ENCODE measurements at regions of chr5 and their contacts with region 1.

Region 1: DNA sequence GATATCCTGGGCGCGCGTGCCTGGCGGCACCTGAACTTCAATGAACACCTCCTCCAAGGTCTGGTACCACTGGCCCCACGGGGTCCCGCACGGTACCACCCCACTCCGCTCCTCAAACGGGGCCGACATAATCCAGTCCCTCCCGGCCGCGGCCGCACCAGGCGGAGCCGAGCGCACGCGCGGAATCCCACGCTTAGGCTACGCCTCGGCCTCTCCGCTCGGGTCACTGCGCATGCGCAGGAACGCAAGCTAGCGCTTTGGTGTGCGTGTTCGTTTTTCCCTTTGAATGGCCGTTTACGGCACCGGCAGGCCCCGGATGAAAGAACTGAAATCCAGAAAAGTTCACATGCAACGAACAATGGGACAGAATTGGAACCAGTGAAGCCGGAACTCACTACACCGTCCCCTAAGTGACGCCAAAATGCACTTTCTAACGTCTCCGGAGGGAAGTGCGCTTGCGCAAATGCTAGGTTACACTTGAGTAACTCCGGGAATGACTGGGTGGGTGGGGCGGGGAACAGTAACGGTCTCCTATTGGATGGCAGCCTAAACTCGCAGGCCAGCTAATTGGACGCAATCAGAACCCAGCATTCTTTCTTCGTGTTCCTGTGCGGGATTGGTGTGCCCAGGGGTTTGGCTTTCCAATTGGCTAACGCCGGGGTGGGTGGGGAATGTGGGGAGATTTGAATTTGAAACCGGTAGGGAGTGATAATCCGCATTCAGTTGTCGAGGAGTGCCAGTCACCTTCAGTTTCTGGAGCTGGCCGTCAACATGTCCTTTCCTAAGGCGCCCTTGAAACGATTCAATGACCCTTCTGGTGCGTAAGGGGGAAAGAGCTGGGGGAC is at the starts of genes HMMR and NUDCD2:
- DNase-seq: peak; percentile 85 to 99
- ATAC-seq: peak; percentile 86 to 93
- H3K4me3 ChIP-seq: peak within 1 kb of the TSS; percentile 73
- H3K27ac ChIP-seq: peak within 1 kb of the TSS; percentile 91 to 92
- H3K4me1 ChIP-seq: peaks cover 27% of the 10 kb centered on the region
- CTCF ChIP-seq: 0 out of 3 replicates have a peak, but pooled peaks have one; percentile 21
- EP300 ChIP-seq: no peak
- POLR2A ChIP-seq: peak; percentile 95
- RAD21 ChIP-seq: no peak
- polyA plus RNA-seq, gene HMMR: 32.9 and 66.0 TPM in 2 replicates
- polyA plus RNA-seq, gene NUDCD2: 17.0 and 22.3 TPM in 2 replicates

Region 2: GRCh38 chr5:163401271-163401670 is 58.9 kb before region 1 on chr5:
- CTCF ChIA-PET with region 1: no interaction called
- POLR2A ChIA-PET with region 1: no interaction called
- DNase-seq: no peak
- ATAC-seq: no peak
- H3K4me3 ChIP-seq: no peak overlapping the region
- H3K27ac ChIP-seq: no peak overlapping the region
- H3K4me1 ChIP-seq: no peaks in the 10 kb centered on the region
- CTCF ChIP-seq: no peak
- EP300 ChIP-seq: no peak
- POLR2A ChIP-seq: no peak
- RAD21 ChIP-seq: no peak

Region 3: GRCh38 chr5:163437309-163438182 is 22.6 kb before region 1 on chr5 and contains the start of gene CCNG1:
- CTCF ChIA-PET with region 1: interaction called, 4 read pairs
- POLR2A ChIA-PET with region 1: interaction called, 76 read pairs
- DNase-seq: peak; percentile 97 to 98
- ATAC-seq: peak; percentile 97 to 98
- H3K4me3 ChIP-seq: peak within 1 kb of the TSS; percentile 94
- H3K27ac ChIP-seq: peak within 1 kb of the TSS; percentile 94 to 98
- H3K4me1 ChIP-seq: peaks cover 25% of the 10 kb centered on the region
- CTCF ChIP-seq: no peak
- EP300 ChIP-seq: no peak
- POLR2A ChIP-seq: peak; percentile 88
- RAD21 ChIP-seq: no peak
- polyA plus RNA-seq, gene CCNG1: 76.5 and 80.5 TPM in 2 replicates

Region 4: GRCh38 chr5:163534492-163535094 is 74.4 kb after region 1 on chr5:
- CTCF ChIA-PET with region 1: no interaction called
- POLR2A ChIA-PET with region 1: no interaction called
- DNase-seq: no peak
- ATAC-seq: peak in 1 of 2 experiments; percentile 24; a peak in 1 of 6 replicates
- H3K4me3 ChIP-seq: no peak overlapping the region
- H3K27ac ChIP-seq: no peak overlapping the region
- H3K4me1 ChIP-seq: no peaks in the 10 kb centered on the region
- CTCF ChIP-seq: no peak
- EP300 ChIP-seq: no peak
- POLR2A ChIP-seq: no peak
- RAD21 ChIP-seq: no peak

Measured in A549 (cell line).